Uterus (tissue), 4 donors: ENCODE measurements at regions of chr1 and their contacts with region 1.

Region 1: DNA sequence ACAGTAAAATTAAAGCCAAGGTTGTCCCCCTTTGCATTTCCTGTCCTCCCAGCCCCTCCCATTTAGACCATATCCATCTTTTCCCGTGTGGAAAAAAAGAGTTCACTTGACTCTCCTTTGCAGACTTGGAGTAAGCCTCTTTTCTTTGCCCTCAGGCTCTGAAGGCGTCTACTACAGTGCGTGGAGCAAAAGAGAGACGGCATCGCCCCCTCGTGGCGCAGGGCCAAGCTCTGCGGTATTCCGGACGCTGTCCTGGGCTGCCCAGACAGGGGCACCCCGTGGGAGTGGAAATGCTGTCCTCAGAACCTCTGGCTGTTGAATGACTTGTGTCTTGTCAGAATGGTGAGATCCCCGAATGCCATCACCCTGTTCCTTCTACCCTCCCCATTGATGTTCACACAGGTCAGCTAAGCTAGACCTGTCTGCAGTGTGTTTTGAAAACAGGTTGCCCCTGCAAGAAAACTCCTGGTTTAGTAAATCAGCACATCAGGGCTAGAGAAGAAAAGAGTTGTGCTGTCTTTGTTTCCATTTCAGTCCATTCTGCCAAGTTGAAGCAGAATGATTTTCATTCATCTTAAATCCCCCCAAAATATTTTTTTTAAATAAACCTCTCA is 12.3 kb upstream of the GJA8 start:
- DNase-seq: peak; percentile 37 to 57
- H3K4me3 ChIP-seq: no peak overlapping the region
- H3K27ac ChIP-seq: no peak overlapping the region
- H3K4me1 ChIP-seq: no peaks in the 10 kb centered on the region
- H3K27me3 ChIP-seq: no peaks in the 10 kb centered on the region
- CTCF ChIP-seq: peak; percentile 47 to 65 (median 58)
- POLR2A ChIP-seq: no peak

Region 2: DNA sequence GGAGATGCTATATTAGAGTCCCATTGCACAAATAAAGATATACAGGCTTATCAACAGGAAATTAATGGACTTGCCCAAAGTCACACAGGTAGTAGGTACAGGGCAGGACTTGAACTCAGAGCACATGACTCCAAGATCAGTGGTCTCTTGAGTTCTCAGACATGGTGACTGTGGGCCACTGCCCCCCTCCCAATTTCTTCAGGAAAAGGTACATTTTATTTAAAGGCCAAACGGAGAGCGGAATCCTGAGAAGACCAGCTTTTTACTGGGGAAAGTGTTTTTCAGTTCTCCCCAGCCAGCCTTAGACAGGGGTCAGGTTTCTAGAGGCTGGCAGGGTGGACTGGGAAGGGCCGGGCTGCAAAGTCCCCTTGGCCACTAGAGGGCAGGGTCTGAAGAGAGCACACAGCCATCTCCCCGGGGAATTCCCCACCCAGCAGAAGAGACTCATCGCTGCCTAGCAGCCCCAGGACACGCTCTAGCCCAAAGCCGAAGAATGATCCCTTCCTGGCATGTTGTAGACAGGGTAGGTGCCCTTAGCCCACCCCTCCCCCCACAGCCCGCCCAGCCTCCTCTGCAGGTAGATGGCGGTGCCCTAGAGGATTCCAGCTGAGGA is 249.6 kb before region 1 on chr1:
- intact Hi-C with region 1: loop called (anchors 5 kb)
- DNase-seq: peak; percentile 54 to 58
- H3K4me3 ChIP-seq: no peak overlapping the region
- H3K27ac ChIP-seq: no peak overlapping the region
- H3K4me1 ChIP-seq: peaks cover 0 to 5% of the 10 kb centered on the region in 2 donors
- H3K27me3 ChIP-seq: no peaks in the 10 kb centered on the region
- CTCF ChIP-seq: peak; percentile 27 to 63 (median 46)
- POLR2A ChIP-seq: no peak

Region 3: DNA sequence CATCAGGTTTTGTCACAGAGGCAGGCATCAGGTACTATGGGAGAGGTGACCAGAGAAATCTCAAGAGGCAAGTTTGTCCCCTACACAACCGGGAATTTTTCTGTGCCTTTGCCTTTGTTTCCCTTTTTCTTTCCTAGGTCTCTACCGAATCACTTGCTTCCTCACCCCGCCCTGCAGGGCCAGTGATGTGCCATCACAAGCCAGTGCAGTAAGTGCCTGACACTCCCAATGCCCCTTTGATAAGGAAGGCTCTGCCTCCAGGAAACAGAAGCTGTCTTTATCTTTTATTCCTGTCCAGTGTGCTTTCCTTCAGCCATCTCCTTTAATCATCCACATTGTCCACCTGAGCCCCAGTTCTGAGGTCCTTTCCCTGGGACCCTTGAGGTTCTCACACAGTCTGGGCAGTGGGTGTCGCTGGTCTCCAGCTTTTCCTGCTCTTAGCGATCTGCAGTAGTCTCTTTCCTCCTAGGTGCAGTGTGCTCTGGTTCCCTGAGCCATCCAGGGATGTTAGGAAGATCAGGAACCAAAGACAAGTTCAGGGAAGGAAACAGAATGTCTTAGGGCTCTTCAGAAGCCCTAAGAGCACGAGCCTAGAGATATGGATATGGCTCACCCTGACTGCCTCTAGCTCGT is 166.5 kb before region 1 on chr1:
- intact Hi-C with region 1: loop called (anchors 5 kb)
- DNase-seq: peak; percentile 29 to 41
- H3K4me3 ChIP-seq: no peak overlapping the region
- H3K27ac ChIP-seq: no peak overlapping the region
- H3K4me1 ChIP-seq: no peaks in the 10 kb centered on the region
- H3K27me3 ChIP-seq: no peaks in the 10 kb centered on the region
- CTCF ChIP-seq: peak; percentile 54 to 65 (median 60)
- POLR2A ChIP-seq: no peak